Heart left ventricle (tissue), 16 donors: ENCODE measurements at regions of chr14 and their contacts with region 1.

Region 1: GRCh38 chr14:103398428-103399195 is 13.4 kb downstream of the MARK3 start:
- DNase-seq: no peak
- ATAC-seq: peak in 3 of 4 donors; percentile 26 to 34 (median 32)
- H3K4me3 ChIP-seq: no peak overlapping the region
- H3K27ac ChIP-seq: peak overlapping the region in 11 of 12 donors; percentile 45 to 75 (median 65)
- H3K4me1 ChIP-seq: peaks cover 23 to 96% (median 87%) of the 10 kb centered on the region in 12 donors
- H3K27me3 ChIP-seq: no peaks in the 10 kb centered on the region
- CTCF ChIP-seq: no peak
- POLR2A ChIP-seq: no peak

Region 2: DNA sequence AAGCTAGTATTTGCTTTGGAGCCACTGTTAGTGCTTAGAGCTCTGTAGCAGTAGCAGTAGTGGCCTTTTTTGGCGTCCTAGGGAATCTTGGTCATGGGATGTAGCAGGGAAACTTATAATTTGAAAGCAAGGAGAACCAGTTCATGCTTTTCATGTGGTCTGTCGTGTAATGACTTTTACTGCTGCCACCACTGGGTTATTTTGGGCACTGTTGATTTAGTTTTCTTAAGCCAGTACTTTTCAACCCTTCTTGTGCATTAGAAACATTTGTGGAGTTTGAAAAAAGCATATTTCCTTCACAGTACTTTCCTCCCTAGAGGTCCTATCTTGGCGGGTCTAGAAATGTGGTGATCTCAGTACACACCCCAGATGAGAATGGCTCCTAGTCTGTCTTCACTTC is 36.3 kb after region 1 on chr14:
- intact Hi-C with region 1: loop called in 2 of 10 experiments (anchors 5 to 10 kb)
- DNase-seq: no peak
- ATAC-seq: peak; percentile 16 to 64 (median 50)
- H3K4me3 ChIP-seq: no peak overlapping the region
- H3K27ac ChIP-seq: peak overlapping the region in 7 of 12 donors; percentile 1 to 49 (median 27)
- H3K4me1 ChIP-seq: peaks cover 3 to 67% (median 29%) of the 10 kb centered on the region in 12 donors
- H3K27me3 ChIP-seq: no peaks in the 10 kb centered on the region
- CTCF ChIP-seq: peak in 2 of 12 donors; percentile 13 to 18
- POLR2A ChIP-seq: no peak